Left cardiac atrium (tissue), 4 donors: ENCODE measurements at regions of chr16 and their contacts with region 1.

Region 1: DNA sequence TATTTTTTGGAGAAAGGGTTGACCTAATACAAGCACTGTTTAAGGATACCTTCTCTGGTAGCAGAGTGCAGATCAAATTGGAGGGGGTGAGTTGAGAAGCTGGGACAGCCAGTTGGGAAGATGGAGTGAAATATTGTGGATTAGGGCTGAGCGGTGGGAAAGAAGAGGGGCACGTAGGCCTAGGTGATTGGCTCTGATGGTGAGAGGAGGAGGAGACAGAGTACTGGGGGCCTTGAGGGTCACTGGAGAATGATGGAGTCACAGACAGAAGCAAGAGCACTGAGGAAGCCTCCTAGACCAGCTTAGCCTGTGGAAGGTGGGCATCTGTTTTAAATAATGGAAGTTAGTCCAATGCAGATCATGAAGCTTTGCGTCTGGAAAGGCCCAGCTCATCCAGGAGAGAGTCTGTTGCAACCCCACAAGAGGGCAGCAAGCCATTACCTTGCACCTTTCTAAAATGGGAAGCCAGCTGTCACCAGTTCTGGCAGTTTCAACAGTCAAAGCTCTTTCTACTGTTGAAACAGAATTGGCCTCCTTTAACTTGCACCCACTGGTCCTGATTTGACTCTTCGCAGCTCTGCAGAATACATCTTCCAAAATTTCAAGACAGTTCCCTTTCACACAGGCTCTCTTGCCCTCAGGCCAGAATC is 11.8 kb downstream of the SLC9A5 start:
- DNase-seq: no peak
- ATAC-seq: peak; percentile 70 to 79

Region 2: DNA sequence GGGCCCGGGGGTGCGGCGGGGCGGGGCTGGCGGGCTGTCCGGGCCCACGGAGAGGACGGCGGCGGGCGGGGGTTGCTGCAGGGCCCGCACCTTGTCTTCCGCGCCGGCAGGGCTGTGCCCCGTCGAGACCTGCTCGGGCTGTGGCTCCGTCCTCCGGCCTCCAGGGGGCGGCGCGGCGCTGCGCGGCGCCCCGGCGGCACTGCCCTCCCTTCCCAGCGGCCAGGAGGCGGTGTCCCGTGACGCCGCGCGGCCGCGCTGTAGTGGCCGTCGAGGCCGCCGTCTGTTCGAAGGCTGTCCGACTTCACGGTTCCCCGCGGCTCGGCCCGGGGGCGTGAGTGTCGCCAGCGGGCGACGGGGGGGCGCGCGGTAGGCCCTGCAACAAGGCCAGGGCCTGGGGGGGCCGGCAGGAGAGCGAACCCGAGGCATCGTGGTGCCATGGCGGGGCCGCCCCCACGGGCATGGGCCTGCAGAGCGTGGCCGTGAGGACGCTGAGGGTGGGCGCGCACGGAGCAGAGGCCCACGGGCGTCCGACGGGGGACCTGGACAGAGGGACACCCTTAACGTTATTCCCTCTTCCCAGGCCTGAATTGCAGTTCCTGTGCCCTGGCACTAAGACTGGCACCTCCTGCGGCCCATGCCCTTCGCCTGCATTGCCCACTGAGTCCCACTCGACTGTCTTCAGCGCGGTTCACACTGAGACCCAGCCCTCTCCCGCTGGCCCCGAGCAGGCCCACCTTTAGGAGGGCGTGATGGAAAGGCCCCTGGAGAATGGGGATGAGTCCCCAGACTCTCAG is 18.9 kb after region 1 on chr16 and contains the start of gene PLEKHG4:
- intact Hi-C with region 1: no loop called
- DNase-seq: peak; percentile 79
- ATAC-seq: peak; percentile 80 to 92
- total RNA-seq, gene PLEKHG4: 1.8 to 2.2 TPM

Region 3: GRCh38 chr16:67393035-67393787 is 132.7 kb after region 1 on chr16 and contains the start of gene TPPP3:
- intact Hi-C with region 1: loop called in 1 of 2 experiments (anchors 10 kb)
- DNase-seq: peak; percentile 95
- ATAC-seq: peak; percentile 79 to 81
- total RNA-seq, gene TPPP3: 22.9 to 40.1 TPM

Region 4: GRCh38 chr16:67406111-67406890 is 145.8 kb after region 1 on chr16:
- intact Hi-C with region 1: loop called in 1 of 2 experiments (anchors 10 kb)
- DNase-seq: no peak
- ATAC-seq: peak; percentile 71 to 86